A673 (cell line): ENCODE measurements at regions of chr10 and their contacts with region 1.

Region 1: GRCh38 chr10:107814865-107815487 is 650.5 kb upstream of the SORCS1 start:
- DNase-seq: peak; percentile 69
- H3K4me3 ChIP-seq: no peak overlapping the region
- H3K27ac ChIP-seq: no peak overlapping the region
- H3K4me1 ChIP-seq: no peaks in the 10 kb centered on the region
- H3K27me3 ChIP-seq: no peaks in the 10 kb centered on the region
- CTCF ChIP-seq: peak; percentile 81

Region 2: GRCh38 chr10:106625751-106626150 is 1189.2 kb before region 1 on chr10:
- CTCF ChIA-PET with region 1: no interaction called
- POLR2A ChIA-PET with region 1: no interaction called
- intact Hi-C with region 1: loop called (anchors 10 kb)
- DNase-seq: no peak
- H3K4me3 ChIP-seq: no peak overlapping the region
- H3K27ac ChIP-seq: no peak overlapping the region
- H3K4me1 ChIP-seq: no peaks in the 10 kb centered on the region
- H3K27me3 ChIP-seq: no peaks in the 10 kb centered on the region
- CTCF ChIP-seq: no peak

Region 3: GRCh38 chr10:106705681-106706100 is 1109.3 kb before region 1 on chr10:
- CTCF ChIA-PET with region 1: no interaction called
- POLR2A ChIA-PET with region 1: no interaction called
- intact Hi-C with region 1: loop called (anchors 2 kb)
- DNase-seq: peak; percentile 81
- H3K4me3 ChIP-seq: no peak overlapping the region
- H3K27ac ChIP-seq: no peak overlapping the region
- H3K4me1 ChIP-seq: no peaks in the 10 kb centered on the region
- H3K27me3 ChIP-seq: no peaks in the 10 kb centered on the region
- CTCF ChIP-seq: peak; percentile 93

Region 4: GRCh38 chr10:106795619-106796018 is 1019.4 kb before region 1 on chr10:
- CTCF ChIA-PET with region 1: no interaction called
- POLR2A ChIA-PET with region 1: no interaction called
- intact Hi-C with region 1: loop called (anchors 1 kb)
- DNase-seq: peak; percentile 65
- H3K4me3 ChIP-seq: no peak overlapping the region
- H3K27ac ChIP-seq: no peak overlapping the region
- H3K4me1 ChIP-seq: no peaks in the 10 kb centered on the region
- H3K27me3 ChIP-seq: no peaks in the 10 kb centered on the region
- CTCF ChIP-seq: peak; percentile 78

Region 5: DNA sequence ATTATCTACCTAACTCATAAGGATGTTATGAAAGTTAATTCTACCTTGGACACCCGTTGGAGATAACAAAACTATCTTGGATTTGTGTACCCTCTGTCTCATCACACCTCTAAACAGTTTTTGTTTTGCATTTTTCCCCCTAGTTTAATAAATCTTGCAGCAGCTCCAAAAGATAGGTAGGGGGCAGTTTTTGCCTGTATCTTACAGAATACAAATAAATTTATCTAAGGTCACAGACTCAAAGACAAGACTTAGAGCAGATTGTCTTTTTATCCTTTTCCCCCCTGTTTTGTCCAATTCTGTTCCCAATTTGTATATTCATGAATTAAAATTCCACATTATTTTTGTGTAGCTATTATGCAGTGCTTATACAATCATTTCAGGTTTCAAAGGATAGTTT is 645.5 kb before region 1 on chr10:
- CTCF ChIA-PET with region 1: no interaction called
- POLR2A ChIA-PET with region 1: no interaction called
- intact Hi-C with region 1: loop called (anchors 1 kb)
- DNase-seq: peak; percentile 17
- H3K4me3 ChIP-seq: no peak overlapping the region
- H3K27ac ChIP-seq: no peak overlapping the region
- H3K4me1 ChIP-seq: no peaks in the 10 kb centered on the region
- H3K27me3 ChIP-seq: peaks cover 21% of the 10 kb centered on the region
- CTCF ChIP-seq: peak; percentile 41; the same call in 1 of the 2 replicates

Region 6: GRCh38 chr10:107409522-107409921 is 405.5 kb before region 1 on chr10:
- CTCF ChIA-PET with region 1: no interaction called
- POLR2A ChIA-PET with region 1: no interaction called
- intact Hi-C with region 1: loop called (anchors 5 kb)
- DNase-seq: peak; percentile 25
- H3K4me3 ChIP-seq: no peak overlapping the region
- H3K27ac ChIP-seq: no peak overlapping the region
- H3K4me1 ChIP-seq: no peaks in the 10 kb centered on the region
- H3K27me3 ChIP-seq: no peaks in the 10 kb centered on the region
- CTCF ChIP-seq: peak; percentile 47

Region 7: DNA sequence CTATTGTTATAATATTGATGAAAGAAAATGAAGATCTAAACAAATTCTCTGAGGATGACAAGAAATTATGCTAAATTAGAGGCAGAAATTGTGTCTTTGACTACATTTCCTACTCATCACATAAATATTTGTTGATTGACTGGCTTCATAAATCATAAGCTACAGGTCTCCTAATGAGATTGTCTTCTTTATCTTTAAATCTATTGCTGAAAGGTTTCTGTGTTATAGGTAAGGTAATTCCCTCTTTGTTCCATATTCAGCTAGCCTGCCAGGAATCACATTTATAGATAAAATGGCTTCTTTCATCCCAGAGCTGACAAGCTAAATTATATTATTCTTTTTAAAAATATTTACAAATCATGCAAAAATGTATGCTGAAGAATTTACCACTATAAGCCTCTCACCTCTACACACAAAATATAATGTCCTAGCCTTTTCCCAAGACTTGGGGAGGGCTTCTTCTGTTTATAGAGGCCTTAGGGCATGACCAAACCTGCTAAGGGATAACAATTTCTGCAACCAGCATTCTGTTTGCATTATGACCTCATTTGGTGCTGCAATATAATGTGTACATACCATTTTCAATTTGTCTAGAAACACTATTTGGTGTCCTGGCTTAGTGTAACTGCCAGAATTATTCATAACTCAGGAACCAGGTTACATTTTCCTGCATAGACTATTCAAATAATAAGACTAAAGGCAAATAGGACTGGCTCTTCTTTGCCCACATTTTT is 204.0 kb before region 1 on chr10:
- CTCF ChIA-PET with region 1: no interaction called
- POLR2A ChIA-PET with region 1: no interaction called
- intact Hi-C with region 1: no loop called
- DNase-seq: no peak
- H3K4me3 ChIP-seq: no peak overlapping the region
- H3K27ac ChIP-seq: no peak overlapping the region
- H3K4me1 ChIP-seq: no peaks in the 10 kb centered on the region
- H3K27me3 ChIP-seq: no peaks in the 10 kb centered on the region
- CTCF ChIP-seq: no peak

Region 8: DNA sequence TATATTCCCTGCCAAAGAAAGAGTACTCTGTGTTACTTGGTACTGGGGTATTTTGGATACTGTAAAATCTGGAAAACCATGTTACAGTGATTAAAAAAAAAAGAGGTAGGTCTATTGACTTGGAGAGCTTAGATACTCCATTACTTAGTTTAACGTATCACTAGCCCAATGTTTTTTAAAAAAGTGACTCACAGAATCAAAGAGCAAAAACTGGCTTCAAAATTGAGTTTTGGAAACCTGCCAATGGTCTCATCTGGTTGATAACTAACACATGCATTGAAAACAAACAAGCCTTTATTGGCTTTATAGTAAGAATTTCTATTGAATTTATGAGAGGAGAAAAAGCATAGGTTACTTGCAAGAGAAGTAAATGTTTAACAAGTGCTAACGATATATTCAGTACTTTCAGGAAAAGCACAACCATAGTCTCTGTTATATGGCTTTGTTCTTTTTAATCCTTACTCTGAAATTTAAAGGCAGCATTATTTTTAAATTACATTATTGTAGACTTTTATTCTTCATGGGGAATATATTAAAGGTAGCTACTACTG is 87.1 kb before region 1 on chr10:
- CTCF ChIA-PET with region 1: no interaction called
- POLR2A ChIA-PET with region 1: no interaction called
- intact Hi-C with region 1: no loop called
- DNase-seq: peak; percentile 29
- H3K4me3 ChIP-seq: no peak overlapping the region
- H3K27ac ChIP-seq: no peak overlapping the region
- H3K4me1 ChIP-seq: no peaks in the 10 kb centered on the region
- H3K27me3 ChIP-seq: no peaks in the 10 kb centered on the region
- CTCF ChIP-seq: no peak

Region 9: DNA sequence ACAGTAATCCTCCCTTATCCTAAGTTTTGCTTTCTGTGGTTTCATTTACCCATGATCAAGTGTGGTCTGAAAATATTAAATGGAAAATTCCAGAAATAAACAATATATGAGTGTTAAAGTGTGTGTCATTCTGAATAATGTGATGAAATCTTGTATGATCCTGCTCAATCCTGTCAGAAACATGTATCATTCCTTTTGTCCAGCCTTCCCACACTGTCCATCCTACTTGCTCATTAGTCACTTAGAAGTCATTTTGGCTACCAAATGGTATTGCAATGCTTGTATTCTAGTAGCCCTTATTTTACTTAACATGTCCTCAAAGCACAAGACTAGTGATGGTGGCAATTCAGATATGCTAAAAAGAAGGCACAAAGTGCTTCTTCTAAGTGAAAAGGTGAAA is 560.7 kb after region 1 on chr10:
- CTCF ChIA-PET with region 1: no interaction called
- POLR2A ChIA-PET with region 1: no interaction called
- intact Hi-C with region 1: no loop called
- DNase-seq: no peak
- H3K4me3 ChIP-seq: no peak overlapping the region
- H3K27ac ChIP-seq: no peak overlapping the region
- H3K4me1 ChIP-seq: no peaks in the 10 kb centered on the region
- H3K27me3 ChIP-seq: no peaks in the 10 kb centered on the region
- CTCF ChIP-seq: no peak